PC-3 (cell line): ENCODE measurements at regions of chr5 and their contacts with region 1.

Region 1: DNA sequence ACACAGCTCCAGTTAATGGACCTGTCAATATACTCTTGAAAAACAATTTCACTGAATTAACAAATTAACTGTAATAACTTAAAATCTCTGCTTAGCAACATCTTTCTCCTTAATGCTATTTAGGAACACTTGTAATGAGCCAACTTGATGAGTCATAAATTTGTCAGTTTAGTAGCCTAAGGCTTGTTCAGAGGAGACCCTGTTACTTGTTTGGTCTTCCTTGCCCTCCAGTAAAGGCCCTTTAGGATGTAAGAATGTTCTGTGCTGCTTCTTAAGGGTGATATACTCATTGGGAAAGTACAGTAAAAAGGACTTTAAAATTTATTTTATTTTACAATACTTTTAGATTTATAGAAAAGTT is 11.4 kb upstream of the MATR3 start:
- DNase-seq: no peak
- ATAC-seq: no peak
- H3K4me3 ChIP-seq: no peak overlapping the region
- H3K27ac ChIP-seq: no peak overlapping the region
- H3K4me1 ChIP-seq: peaks cover 37% of the 10 kb centered on the region
- H3K27me3 ChIP-seq: no peaks in the 10 kb centered on the region
- CTCF ChIP-seq: no peak

Region 2: DNA sequence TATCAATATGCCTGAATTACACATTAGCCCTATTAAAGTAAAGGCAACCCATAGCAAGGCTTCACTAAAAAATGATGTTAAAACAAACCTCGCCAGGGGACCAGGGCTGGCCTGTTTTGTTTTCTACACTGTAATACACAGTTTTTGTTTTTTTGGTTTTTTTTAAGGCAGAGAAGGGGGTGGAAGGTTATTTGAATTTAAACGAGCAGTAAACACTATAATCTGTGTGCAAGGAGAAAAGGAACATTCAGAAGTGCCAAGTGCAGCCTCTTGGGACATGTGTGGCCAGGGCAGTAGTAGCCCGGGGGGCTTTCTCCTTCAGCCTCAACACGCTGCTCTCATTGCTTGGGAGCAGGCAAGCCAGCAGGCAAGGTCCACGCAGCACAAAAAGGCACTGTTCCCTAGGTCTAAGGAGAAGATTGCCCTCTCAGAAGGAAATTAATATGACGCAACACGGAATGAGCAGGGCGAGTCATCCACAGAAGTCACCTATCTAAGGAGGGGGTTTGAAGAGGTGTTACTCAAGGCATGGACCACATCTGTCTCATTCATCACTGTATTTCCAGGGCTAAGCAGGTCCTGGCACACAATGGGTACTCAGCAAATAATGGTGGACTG is 100.2 kb before region 1 on chr5:
- CTCF ChIA-PET with region 1: no interaction called
- POLR2A ChIA-PET with region 1: no interaction called
- intact Hi-C with region 1: no loop called
- DNase-seq: peak; percentile 16
- ATAC-seq: no peak
- H3K4me3 ChIP-seq: no peak overlapping the region
- H3K27ac ChIP-seq: no peak overlapping the region
- H3K4me1 ChIP-seq: no peaks in the 10 kb centered on the region; the same call in 1 of the 2 replicates
- H3K27me3 ChIP-seq: no peaks in the 10 kb centered on the region
- CTCF ChIP-seq: no peak

Region 3: GRCh38 chr5:139268364-139269202 is 13.6 kb before region 1 on chr5:
- CTCF ChIA-PET with region 1: interaction called, 19 read pairs
- POLR2A ChIA-PET with region 1: no interaction called
- intact Hi-C with region 1: no loop called
- DNase-seq: no peak
- ATAC-seq: no peak; the same call in 1 of the 2 replicates
- H3K4me3 ChIP-seq: no peak overlapping the region
- H3K27ac ChIP-seq: no peak overlapping the region
- H3K4me1 ChIP-seq: peaks cover 20% of the 10 kb centered on the region
- H3K27me3 ChIP-seq: no peaks in the 10 kb centered on the region
- CTCF ChIP-seq: peak; percentile 23; the same call in 1 of the 2 replicates

Region 4: DNA sequence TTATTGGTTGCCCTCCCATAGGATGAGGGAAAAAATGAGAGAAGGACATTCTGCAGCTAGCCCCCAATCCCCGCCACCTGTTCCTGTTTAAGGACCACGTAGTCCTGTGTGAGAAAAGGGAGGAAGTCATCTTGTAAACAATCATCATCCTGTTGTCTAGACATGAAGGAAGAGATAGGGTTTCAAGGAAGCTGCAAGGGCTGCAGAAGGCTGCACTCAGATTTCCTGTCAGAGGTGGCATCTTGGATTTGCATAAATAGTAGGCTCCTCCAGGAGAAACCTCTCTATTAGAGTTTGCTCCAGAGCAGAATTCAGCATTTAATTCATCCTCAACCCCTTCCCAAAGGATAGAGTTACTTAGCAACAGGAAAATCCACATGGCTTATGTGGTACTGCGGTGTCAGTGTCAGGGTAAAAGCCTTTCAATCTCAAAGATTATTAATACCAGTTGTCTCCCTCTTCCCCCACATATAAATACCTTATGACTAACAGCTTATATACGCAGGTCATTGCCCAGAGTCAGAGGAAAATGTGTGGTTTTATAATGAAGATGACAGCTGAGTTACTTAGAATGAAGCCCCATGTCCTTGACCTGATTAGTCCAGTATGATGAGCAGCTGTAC is 161.8 kb after region 1 on chr5:
- CTCF ChIA-PET with region 1: no interaction called
- POLR2A ChIA-PET with region 1: no interaction called
- intact Hi-C with region 1: no loop called
- DNase-seq: peak; percentile 51
- ATAC-seq: peak; percentile 37
- H3K4me3 ChIP-seq: no peak overlapping the region
- H3K27ac ChIP-seq: no peak overlapping the region
- H3K4me1 ChIP-seq: peaks cover 13% of the 10 kb centered on the region
- H3K27me3 ChIP-seq: no peaks in the 10 kb centered on the region
- CTCF ChIP-seq: no peak